Common myeloid progenitor, CD34-positive (primary cell): ENCODE measurements at regions of chr2 and their contacts with region 1.

Region 1: GRCh38 chr2:58571181-58571852 is 330.2 kb upstream of the FANCL start:
- DNase-seq: peak; percentile 76 to 83 (median 78)
- H3K4me3 ChIP-seq: peak overlapping the region in 3 of 7 experiments; percentile 1 to 58 (median 8)
- H3K27ac ChIP-seq: no peak overlapping the region
- H3K4me1 ChIP-seq: peaks cover 3 to 30% (median 9%) of the 10 kb centered on the region in 4 experiments
- H3K27me3 ChIP-seq: no peaks in the 10 kb centered on the region

Region 2: DNA sequence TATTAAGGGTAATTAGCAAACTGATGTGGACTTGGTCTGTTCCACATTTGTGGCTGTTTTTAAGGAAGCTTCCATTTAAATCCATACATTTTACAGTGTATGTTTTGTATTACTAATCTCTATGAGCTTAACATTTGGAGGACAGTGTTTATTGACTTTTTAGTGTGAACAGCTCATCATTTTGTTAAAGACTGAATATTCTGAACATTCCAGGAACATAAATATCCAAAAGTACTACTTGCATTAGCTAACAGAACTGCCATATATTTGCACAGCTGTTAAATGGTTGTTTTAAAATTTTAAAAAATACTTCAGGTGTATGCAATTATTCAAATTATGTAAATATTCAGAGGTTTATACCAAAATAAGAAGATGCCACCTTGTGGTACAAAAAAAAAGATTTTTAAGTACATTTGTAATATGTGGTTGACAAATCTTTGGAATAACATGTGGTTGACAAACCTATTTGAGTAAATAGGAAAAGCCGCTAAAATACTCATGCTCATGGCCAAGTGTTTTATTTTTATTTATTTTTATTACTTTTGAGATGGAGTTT is 109.5 kb after region 1 on chr2:
- CTCF ChIA-PET with region 1: interaction called, 16 read pairs
- POLR2A ChIA-PET with region 1: no interaction called
- DNase-seq: peak in 2 of 3 donors; percentile 32 to 53
- H3K4me3 ChIP-seq: no peak overlapping the region
- H3K27ac ChIP-seq: no peak overlapping the region
- H3K4me1 ChIP-seq: peaks cover 0 to 12% (median 1%) of the 10 kb centered on the region in 4 experiments
- H3K27me3 ChIP-seq: no peaks in the 10 kb centered on the region

Region 3: GRCh38 chr2:58762176-58762781 is 191.0 kb after region 1 on chr2:
- CTCF ChIA-PET with region 1: interaction called, 11 read pairs
- POLR2A ChIA-PET with region 1: no interaction called
- DNase-seq: peak; percentile 77 to 81 (median 80)
- H3K4me3 ChIP-seq: no peak overlapping the region
- H3K27ac ChIP-seq: peak overlapping the region in 1 of 2 experiments; percentile 60
- H3K4me1 ChIP-seq: peaks cover 24 to 85% (median 49%) of the 10 kb centered on the region in 4 experiments
- H3K27me3 ChIP-seq: no peaks in the 10 kb centered on the region